ENCODE measurements at regions of chr5 and their contacts with region 1.

Region 1: DNA sequence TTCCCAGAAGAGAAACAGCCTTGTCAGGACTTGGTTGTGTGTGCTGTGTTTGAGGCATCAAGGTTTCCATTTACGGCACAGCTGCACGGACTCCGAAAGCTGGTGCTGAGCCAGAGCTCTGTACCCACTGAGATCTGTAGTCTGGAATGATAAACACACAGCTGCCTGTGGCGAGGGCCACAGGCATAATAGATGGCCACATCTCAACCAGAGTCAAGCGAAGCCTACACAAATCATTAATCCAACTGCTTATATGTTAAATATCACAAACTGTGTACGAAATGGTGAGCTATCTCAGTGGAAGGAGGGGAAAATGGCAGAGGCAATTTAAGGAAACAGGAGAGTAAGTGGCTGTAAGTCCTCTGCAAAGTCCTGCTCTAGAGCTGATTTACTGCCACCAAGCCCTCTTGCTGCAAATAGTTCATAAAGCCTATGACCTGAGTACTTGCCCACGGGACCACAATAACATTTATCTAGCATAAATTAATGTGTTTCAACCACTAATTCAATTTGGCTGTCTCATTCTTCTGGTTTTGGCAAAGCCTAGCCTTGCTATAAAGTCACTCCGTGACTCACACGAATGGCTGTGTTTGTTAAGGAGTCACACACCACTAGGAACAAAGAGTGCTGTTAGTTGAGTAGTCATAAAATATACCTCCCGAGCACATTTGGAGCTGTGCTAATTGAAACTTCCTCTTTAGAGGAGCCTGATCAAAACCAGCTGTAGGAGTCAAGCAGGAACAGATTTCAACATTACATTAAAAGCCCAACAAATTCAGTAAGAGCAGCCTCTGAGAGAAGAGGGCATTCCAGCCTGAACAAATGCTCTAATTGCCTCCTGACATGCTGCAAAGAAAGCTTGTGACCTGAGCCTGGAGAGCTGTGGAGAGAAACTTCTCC is 738.6 kb upstream of the ZNF608 start:
- DNase-seq: peak; percentile 90
- ATAC-seq: peak; percentile 96
- H3K4me3 ChIP-seq: peak overlapping the region; percentile 18 to 41; a peak in 3 of 4 replicates
- H3K27ac ChIP-seq: peak overlapping the region; percentile 100
- H3K4me1 ChIP-seq: peaks cover 39% of the 10 kb centered on the region
- H3K27me3 ChIP-seq: no peaks in the 10 kb centered on the region
- CTCF ChIP-seq: no peak

Region 2: DNA sequence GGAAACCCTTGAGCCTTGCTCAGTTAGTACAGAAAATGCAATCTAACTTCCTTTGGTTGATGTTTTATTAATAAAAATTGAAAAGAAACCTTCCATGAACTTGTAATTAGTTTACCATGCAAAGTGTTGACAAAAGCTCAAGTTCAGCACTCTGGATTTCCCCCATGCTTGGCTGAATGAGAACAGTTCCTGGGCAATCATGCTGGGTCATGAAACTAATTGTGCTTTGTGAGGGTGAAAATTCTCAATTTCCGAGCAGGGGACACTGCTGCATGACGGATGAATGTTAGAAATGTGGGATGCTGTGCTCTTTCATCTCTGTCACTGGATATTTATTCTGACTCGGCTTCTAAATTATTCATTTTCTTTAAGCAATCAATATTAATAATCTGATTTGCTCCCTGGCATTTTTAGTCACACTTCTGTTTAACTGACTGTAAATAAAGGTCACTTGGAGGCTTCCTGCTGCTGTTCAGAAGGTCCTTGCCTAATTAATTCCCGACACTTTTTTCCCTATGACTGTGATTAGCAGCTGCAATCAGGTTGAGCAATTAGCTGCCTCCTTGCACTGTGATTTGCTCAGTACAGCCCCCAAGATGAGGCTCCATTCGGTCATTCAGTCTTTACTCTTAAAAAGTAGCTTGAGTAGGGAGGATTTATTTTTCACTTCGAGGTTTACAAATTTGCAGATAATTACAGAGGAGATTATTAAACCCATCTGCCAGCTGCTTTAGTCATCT is 60.4 kb before region 1 on chr5:
- CTCF ChIA-PET with region 1: no interaction called
- POLR2A ChIA-PET with region 1: no interaction called
- in situ Hi-C with region 1: no loop called
- intact Hi-C with region 1: loop called (anchors 5 kb)
- DNase-seq: no peak
- ATAC-seq: no peak
- H3K4me3 ChIP-seq: no peak overlapping the region
- H3K27ac ChIP-seq: peak overlapping the region; percentile 72
- H3K4me1 ChIP-seq: peaks cover 18% of the 10 kb centered on the region; the same call in 1 of the 2 replicates
- H3K27me3 ChIP-seq: no peaks in the 10 kb centered on the region
- CTCF ChIP-seq: no peak

Region 3: DNA sequence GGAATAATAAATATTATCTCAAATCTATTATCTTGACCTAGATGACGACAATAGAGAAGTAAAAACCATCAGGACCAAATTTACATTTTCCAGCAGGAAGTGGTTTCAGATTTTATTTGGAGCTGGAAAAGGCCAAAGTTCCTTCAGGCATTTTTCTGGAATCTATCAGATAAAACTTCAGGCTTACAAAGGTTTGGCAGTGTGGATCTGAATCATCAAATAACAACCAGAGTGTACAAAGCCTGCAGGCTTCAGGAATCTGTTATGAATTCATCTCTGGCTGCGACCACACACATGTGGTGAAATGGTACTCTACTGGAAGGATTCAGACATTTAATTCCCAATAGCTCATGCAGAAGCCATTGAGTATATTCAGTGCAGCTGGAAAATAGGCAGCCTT is 211.8 kb after region 1 on chr5:
- CTCF ChIA-PET with region 1: no interaction called
- POLR2A ChIA-PET with region 1: no interaction called
- in situ Hi-C with region 1: no loop called
- intact Hi-C with region 1: loop called (anchors 2 kb)
- DNase-seq: no peak
- ATAC-seq: peak; percentile 87
- H3K4me3 ChIP-seq: no peak overlapping the region
- H3K27ac ChIP-seq: peak overlapping the region; percentile 93
- H3K4me1 ChIP-seq: peaks cover 39% of the 10 kb centered on the region
- H3K27me3 ChIP-seq: no peaks in the 10 kb centered on the region
- CTCF ChIP-seq: no peak

Region 4: GRCh38 chr5:125835293-125836172 is 350.5 kb after region 1 on chr5:
- CTCF ChIA-PET with region 1: no interaction called
- POLR2A ChIA-PET with region 1: no interaction called
- in situ Hi-C with region 1: no loop called
- intact Hi-C with region 1: loop called (anchors 10 kb)
- DNase-seq: peak; percentile 22
- ATAC-seq: peak; percentile 85
- H3K4me3 ChIP-seq: no peak overlapping the region
- H3K27ac ChIP-seq: peak overlapping the region; percentile 66
- H3K4me1 ChIP-seq: peaks cover 5% of the 10 kb centered on the region
- H3K27me3 ChIP-seq: no peaks in the 10 kb centered on the region
- CTCF ChIP-seq: peak; percentile 85

Region 5: DNA sequence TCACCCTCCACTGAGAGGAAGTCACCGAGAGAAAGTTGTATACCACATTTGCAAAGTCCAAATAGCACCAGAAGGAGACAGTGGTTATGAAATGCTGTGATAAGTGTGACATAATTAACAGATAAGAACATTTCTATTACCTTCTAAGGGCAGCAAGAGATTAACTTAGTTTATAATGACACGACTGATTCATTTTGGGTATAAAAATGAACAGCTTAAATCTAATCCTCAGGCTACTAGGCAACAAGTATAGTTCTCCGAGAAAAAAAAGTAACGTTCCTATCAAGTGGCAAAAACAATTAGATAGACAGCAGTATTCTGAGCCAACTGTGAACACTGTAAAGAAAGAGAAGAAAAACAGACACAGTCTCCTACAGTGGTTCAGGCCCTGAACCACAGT is 507.1 kb after region 1 on chr5:
- CTCF ChIA-PET with region 1: no interaction called
- POLR2A ChIA-PET with region 1: no interaction called
- in situ Hi-C with region 1: no loop called
- intact Hi-C with region 1: no loop called
- DNase-seq: no peak
- ATAC-seq: no peak
- H3K4me3 ChIP-seq: no peak overlapping the region
- H3K27ac ChIP-seq: no peak overlapping the region
- H3K4me1 ChIP-seq: no peaks in the 10 kb centered on the region
- H3K27me3 ChIP-seq: no peaks in the 10 kb centered on the region
- CTCF ChIP-seq: no peak

Measured in Panc1 (cell line).